ENCODE measurements at regions of chr16 and their contacts with region 1.

Region 1: DNA sequence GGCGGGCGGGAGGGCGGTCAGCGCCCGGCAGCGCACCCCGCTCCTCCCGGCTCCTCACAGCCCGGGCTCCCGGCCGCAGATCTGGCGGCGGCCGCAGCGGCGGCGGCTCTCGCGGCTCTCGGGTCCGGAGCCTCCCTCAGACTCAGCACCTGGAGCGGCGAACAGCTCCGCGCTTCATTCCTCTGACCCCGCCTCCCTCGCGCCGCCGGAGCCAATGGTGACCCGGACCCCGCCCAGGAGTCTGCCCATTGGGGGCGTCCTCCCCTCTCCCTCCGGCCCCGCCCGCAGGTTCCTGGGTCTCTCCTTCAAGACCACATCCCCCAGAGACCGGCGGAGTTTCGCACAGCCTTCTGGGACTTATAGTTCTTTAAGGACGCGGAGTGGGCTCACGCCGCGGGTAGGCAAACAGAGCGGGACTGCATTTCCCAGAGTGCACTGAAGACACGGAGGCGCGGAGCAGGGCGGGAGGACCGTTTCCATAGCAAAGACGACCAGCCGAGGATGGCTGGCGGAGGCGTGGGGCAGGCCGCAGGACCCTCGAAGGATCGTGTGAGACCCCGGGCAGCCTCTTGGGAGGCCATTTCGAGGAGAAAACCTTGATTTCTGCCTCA is at the start of gene SMPD3:
- DNase-seq: peak; percentile 98
- H3K4me3 Mint-ChIP-seq: peak within 1 kb of the TSS; percentile 72
- H3K27ac Mint-ChIP-seq: peak within 1 kb of the TSS; percentile 3
- H3K4me1 Mint-ChIP-seq: peaks cover 5% of the 10 kb centered on the region
- H3K27me3 Mint-ChIP-seq: peaks cover 35% of the 10 kb centered on the region
- total RNA-seq, gene SMPD3: 0.49 and 0.61 TPM in 2 replicates

Region 2: DNA sequence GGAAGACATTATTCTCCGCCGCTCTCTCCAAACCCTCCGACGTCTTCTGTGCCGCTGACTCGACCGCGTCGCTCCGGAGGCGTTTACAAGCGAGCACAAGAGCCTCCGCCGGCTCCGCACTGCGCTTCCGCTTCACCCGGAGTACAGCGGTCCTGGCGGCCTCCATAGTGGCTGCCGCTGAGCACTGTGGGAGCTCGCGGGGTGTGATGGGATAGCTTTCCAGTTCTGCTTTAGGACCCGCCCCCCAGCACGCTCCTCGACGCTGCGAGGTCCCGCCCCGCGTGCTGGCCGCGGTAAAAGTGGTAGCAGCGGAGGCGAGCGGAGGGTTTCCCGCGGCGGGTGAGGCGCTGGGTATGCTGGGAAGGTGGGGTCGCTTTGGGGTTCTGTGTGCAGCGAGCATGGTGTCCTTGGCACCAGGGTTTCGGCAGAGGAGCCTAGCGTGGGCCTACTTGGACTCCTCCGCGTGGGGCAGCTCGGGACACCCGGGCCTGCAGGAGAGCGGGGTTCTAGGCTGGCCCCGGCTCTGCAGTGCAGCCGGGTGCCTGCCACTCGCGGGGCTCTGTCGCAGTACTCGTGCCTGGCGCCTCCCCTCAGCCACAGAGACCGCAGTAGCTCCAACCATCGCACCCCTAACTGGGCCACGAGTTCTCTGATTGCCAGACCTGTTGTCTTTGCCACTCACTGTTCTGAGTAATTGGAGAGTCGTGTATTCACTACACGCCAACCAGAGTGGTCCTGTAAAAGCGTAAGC is 137.5 kb before region 1 on chr16 and contains the starts of genes PRMT7 and SLC7A6OS:
- intact Hi-C with region 1: loop called (anchors 1 kb)
- DNase-seq: peak; percentile 92
- H3K4me3 Mint-ChIP-seq: peak within 1 kb of the TSS; percentile 99
- H3K27ac Mint-ChIP-seq: peak within 1 kb of the TSS; percentile 98
- H3K4me1 Mint-ChIP-seq: peaks cover 43% of the 10 kb centered on the region
- H3K27me3 Mint-ChIP-seq: no peaks in the 10 kb centered on the region
- total RNA-seq, gene PRMT7: 80.6 and 85.2 TPM in 2 replicates
- total RNA-seq, gene SLC7A6OS: 26.5 and 27.6 TPM in 2 replicates

Region 3: GRCh38 chr16:68417711-68418301 is 30.7 kb before region 1 on chr16:
- intact Hi-C with region 1: loop called (anchors 1 kb)
- DNase-seq: peak; percentile 75
- H3K4me3 Mint-ChIP-seq: peak overlapping the region; percentile 75
- H3K27ac Mint-ChIP-seq: peak overlapping the region; percentile 86
- H3K4me1 Mint-ChIP-seq: peaks cover 38% of the 10 kb centered on the region
- H3K27me3 Mint-ChIP-seq: peaks cover 6% of the 10 kb centered on the region

Region 4: DNA sequence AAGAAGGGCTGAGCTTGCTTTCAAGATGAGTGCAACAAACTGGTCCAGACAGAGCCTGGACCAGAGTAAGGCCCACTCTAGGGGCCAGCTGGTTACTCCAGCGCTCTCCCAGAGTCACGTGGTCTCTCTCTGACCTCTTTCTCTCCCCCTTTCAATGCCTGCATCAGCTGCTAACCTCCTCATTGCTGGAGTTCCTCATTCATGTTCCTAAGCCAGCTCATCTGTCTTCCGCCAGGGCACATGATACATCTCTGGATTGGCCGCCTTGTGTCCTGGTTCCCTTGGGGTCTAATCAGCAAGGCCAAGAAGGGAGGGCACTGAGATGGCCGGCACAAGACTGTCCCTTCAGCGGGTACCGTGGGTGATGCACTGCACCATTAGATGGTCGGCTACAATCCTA is 63.7 kb after region 1 on chr16:
- intact Hi-C with region 1: loop called (anchors 1 kb)
- DNase-seq: no peak
- H3K4me3 Mint-ChIP-seq: no peak overlapping the region
- H3K27ac Mint-ChIP-seq: no peak overlapping the region
- H3K4me1 Mint-ChIP-seq: no peaks in the 10 kb centered on the region
- H3K27me3 Mint-ChIP-seq: peaks cover 26% of the 10 kb centered on the region

Region 5: DNA sequence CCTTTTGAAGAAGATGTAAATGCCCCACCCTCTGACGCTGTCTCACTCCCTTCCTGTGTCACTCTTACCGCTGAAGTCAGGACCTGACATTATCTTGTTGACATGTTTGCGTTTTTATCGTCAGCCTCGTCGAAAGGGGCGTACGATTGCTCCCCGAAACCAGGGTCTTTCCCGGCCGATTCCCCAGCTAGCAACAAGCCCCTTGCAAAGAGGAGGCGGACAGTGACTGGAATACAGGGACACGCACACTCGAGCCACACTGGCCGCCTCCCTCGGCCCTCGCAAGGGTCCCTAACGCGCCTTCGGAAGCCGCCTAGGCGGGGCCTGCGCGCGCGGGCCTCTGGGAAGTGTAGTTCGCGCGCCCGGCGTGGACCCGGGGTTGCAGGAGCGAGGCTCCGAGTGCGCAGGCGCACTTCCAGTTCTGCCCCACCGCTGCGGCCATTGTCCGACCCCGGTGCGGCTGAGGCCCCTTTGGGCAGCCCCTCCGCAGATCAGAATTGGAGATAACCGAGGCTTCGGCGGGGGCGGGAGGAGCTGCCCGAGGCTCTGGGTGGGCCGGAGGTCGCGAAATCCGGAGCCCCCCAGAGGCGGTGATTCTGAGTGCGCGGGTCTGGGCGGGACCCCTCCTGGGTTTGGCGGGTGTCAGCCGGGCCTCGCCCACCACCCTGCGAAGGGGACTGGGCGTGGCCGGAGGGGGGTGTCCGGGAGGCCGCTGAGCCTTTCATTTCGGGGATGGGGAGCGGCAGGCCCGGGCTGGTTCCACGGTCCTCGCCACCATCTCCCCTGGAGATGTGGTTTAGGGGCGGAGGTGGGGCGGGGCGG is 90.6 kb after region 1 on chr16 and contains the start of gene ZFP90:
- intact Hi-C with region 1: loop called (anchors 1 kb)
- DNase-seq: peak; percentile 84
- H3K4me3 Mint-ChIP-seq: peak within 1 kb of the TSS; percentile 95
- H3K27ac Mint-ChIP-seq: peak within 1 kb of the TSS; percentile 96
- H3K4me1 Mint-ChIP-seq: peaks cover 14% of the 10 kb centered on the region
- H3K27me3 Mint-ChIP-seq: no peaks in the 10 kb centered on the region
- total RNA-seq, gene ZFP90: 19.3 and 21.9 TPM in 2 replicates